ENCODE measurements at regions of chr19 and their contacts with region 1.

Region 1: GRCh38 chr19:15177269-15178116 is 23.3 kb downstream of the NOTCH3 start:
- DNase-seq: peak; percentile 86
- H3K4me3 ChIP-seq: peak overlapping the region in 3 of 4 donors; percentile 13 to 36 (median 27)
- H3K27ac ChIP-seq: no peak overlapping the region
- H3K4me1 ChIP-seq: peaks cover 0 to 10% (median 8%) of the 10 kb centered on the region in 4 donors
- H3K27me3 ChIP-seq: peaks cover 4 to 18% (median 10%) of the 10 kb centered on the region in 3 donors
- CTCF ChIP-seq: peak; percentile 82 to 97 (median 87)
- EP300 ChIP-seq: no peak
- POLR2A ChIP-seq: no peak

Region 2: GRCh38 chr19:15251749-15252397 is 74.4 kb after region 1 on chr19:
- intact Hi-C with region 1: loop called (anchors 5 kb)
- DNase-seq: peak; percentile 97
- H3K4me3 ChIP-seq: peak overlapping the region in 2 of 4 donors; percentile 16 to 17
- H3K27ac ChIP-seq: peak overlapping the region; percentile 77 to 87 (median 84)
- H3K4me1 ChIP-seq: peaks cover 0 to 69% (median 66%) of the 10 kb centered on the region in 4 donors
- H3K27me3 ChIP-seq: no peaks in the 10 kb centered on the region
- CTCF ChIP-seq: peak; percentile 33 to 72 (median 64)
- EP300 ChIP-seq: peak in 2 of 4 donors; percentile 41 to 77
- POLR2A ChIP-seq: no peak

Region 3: DNA sequence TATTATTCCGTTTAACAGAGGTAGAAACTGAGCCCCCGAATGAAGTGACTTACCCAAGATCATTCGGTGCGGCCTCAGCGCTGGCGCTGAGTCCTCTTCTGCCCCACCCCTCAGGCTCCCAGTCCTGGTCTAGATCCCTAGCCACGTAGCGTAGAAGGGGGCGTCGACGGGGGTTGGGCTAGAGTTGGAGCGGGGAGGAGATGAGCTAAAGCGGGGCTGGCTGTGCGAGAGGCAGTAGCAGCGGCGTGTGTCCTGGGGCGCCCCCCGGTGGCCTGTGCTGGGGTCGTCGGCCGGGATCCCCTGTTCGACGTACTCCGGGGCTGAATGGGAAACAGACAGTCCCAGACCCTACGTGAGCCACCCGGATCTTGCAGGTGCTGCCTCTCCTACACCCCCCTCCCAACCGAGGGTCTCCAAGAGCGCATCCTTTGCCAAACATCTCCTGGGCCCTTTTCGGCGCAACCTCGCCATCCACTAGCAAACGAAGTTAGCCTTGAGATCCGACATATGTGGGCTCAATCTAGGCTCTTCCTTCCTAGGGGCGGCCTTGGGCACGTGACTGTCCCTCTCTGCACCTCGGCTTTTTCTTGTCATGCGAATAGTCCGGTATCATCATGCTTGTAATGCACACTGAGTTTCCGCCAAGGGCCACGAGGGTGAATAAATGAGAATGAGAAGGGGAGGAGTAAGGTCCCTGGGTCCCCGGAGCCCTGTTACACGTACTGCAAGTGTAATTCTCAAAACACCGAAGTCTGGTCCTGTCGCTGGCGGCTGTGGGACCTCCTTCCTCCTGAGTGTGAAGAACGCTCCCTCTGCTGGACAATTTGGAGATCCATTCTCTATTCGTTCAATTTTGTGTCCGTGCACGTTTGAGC is 378.5 kb after region 1 on chr19:
- intact Hi-C with region 1: loop called (anchors 1 kb)
- DNase-seq: peak; percentile 93
- H3K4me3 ChIP-seq: peak overlapping the region in 2 of 4 donors; percentile 31 to 40
- H3K27ac ChIP-seq: peak overlapping the region in 3 of 4 donors; percentile 35 to 69 (median 41)
- H3K4me1 ChIP-seq: peaks cover 0 to 20% (median 18%) of the 10 kb centered on the region in 4 donors
- H3K27me3 ChIP-seq: peaks cover 4 to 37% (median 16%) of the 10 kb centered on the region in 3 donors
- CTCF ChIP-seq: peak; percentile 73 to 84 (median 80)
- EP300 ChIP-seq: no peak
- POLR2A ChIP-seq: no peak

Measured in sigmoid colon (tissue), 7 donors.